RWPE1 (cell line): ENCODE measurements at regions of chr17 and their contacts with region 1.

Region 1: DNA sequence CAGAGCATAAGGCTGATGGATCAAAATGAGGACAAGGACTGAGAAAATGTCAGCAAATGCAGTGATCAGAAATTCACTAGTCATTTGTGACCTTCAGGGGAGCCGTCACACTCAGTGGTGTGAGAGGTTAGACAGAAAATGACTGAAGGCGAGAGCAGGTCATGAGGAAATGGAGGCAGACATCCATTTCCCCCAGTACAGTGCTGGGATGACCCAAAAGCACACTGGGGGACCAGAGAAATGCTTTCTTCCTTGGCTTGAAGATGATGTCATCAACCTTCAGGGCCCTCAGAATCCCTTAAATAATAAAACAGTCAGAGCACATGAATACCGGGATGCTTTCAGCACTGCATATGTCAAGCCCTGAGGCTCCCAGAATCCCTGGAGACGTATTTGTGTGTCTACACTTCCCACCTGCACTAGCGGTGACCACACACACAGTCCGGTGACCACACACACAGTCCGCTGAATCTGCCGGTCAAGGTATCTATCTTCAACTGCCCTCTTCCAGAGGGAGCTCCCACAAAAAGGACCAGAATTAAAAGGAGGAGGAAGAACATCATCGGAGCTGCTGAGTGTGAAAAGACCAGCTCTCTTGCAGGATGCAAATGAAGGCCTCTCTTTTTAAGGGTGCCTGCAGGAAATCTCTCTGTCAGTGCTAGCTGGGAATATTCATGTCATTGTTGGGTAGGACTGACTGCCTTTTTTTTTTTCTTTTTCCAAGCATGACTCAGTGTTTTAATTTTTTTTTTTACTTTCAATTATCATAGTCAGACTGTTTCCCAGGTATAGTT is 8.2 kb downstream of the UBE2O start:
- DNase-seq: no peak
- H3K27ac ChIP-seq: no peak overlapping the region
- CTCF ChIP-seq: no peak

Region 2: DNA sequence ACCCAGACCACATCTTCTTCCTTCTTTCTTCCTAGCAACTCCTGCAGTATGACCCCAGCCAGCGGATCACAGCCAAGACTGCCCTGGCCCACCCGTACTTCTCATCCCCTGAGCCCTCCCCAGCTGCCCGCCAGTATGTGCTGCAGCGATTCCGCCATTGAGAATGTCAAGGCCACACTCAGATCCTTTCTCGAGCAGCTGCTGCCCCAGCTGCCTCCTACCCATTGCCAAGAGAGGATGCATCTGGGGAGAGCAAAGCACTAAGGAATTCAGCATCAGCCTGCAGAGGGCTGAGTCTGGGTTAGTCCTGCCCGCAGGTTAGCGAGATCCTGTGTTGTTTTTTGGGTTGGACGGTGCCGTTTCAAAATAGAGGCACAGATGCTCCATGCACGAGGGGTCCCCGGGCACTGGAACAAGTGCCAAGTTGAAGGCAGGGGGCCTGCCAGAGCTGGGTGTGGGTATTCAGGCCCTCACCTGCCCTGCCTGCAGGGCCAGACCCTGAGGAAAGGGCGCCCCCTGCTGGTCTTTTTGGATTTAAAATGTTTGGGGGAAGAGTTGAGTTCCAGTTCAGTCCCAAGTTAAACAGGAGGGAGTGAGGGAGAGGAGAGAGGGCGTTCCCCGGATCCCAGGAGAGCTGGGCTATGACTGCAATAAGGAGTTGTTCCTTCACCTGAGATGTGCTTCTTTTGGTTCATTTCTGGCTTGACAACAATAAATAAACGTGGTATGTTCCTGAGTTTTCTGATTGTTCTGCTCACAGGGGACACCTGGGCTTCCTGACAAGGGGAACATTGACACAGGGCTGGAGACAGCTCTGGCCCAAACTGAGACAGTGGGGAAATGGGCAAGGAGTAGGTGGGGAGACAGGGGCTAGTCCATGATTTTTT is 439.2 kb before region 1 on chr17:
- CTCF ChIA-PET with region 1: interaction called, 10 read pairs
- POLR2A ChIA-PET with region 1: no interaction called
- DNase-seq: peak; percentile 44
- H3K27ac ChIP-seq: peak overlapping the region; percentile 50
- CTCF ChIP-seq: peak; percentile 71

Region 3: DNA sequence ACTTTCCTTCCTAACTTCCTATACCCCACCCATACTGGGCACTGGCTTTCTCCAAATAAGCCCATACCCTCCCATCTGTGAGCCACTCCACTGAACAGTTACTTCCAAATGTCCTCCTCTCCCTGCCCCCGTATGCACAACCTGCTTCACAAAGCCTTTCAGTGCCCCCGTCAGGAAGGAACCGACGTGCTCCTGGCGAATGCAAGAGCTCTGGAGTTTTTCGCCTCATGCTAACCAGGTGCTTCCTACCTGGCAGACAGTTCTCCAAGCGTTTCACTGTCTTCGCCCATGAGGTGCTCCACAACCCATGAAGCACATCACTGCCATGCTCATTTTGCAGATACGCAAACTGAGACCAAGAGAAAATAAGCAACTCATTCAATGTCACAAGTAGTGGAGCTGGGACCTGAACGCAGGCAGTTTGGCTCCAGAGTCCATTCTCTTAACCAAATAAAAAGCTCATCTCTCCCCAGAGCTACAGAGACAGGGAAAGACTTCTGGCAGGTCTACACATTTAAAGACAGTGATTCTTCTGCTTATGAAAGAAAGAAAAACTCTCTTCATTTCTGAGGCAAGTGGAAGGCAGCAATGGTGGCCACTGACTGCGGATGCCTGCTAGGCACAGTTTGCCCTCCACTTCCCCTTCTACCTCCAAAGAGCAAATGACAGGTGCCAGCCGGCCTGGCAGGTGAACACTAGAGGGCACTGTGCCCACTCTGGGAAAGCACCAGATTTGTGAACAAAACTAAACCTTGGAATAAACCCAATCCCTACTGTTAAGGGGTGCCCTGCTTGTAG is 36.5 kb before region 1 on chr17:
- CTCF ChIA-PET with region 1: interaction called, 12 read pairs
- POLR2A ChIA-PET with region 1: no interaction called
- DNase-seq: peak; percentile 60
- H3K27ac ChIP-seq: peak overlapping the region; percentile 12; the same call in 1 of the 2 replicates
- CTCF ChIP-seq: peak; percentile 99